IMR-90 (cell line): ENCODE measurements at regions of chr9 and their contacts with region 1.

Region 1: GRCh38 chr9:132507746-132508469 is 74.5 kb upstream of the BARHL1 start:
- DNase-seq: peak; percentile 67
- ATAC-seq: peak; percentile 94
- H3K4me3 ChIP-seq: no peak overlapping the region
- H3K27ac ChIP-seq: no peak overlapping the region
- H3K4me1 ChIP-seq: no peaks in the 10 kb centered on the region
- H3K27me3 ChIP-seq: peaks cover 56% of the 10 kb centered on the region
- CTCF ChIP-seq: peak; percentile 79
- POLR2A ChIP-seq: no peak
- RAD21 ChIP-seq: peak; percentile 85

Region 2: DNA sequence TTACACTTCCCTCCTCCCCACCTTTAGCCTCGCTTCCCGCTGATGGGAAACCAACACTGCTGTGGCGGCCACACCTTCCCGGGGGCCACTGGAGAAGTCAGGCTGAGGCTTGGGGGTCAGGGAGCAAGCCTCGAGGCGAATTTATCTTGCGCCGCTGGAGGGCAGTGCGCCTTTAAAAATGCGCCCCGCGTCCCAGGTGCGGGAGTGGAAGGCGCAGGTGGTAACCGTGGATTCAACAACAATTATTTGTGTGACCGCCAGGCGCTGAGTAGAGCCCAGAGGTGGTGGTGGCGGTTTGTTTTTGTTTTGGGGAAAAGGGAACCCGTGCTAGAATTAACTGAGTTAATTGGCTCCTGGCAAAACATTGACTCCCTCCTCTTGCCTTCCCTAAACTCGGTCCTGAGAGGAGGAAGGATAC is 96.8 kb before region 1 on chr9:
- CTCF ChIA-PET with region 1: no interaction called
- POLR2A ChIA-PET with region 1: no interaction called
- dilution Hi-C with region 1: no loop called
- in situ Hi-C with region 1: no loop called
- intact Hi-C with region 1: loop called (anchors 10 kb)
- DNase-seq: peak; percentile 7
- ATAC-seq: peak; percentile 31; the same call in 1 of the 2 replicates
- H3K4me3 ChIP-seq: no peak overlapping the region
- H3K27ac ChIP-seq: no peak overlapping the region
- H3K4me1 ChIP-seq: no peaks in the 10 kb centered on the region
- H3K27me3 ChIP-seq: peaks cover 43% of the 10 kb centered on the region
- CTCF ChIP-seq: peak; percentile 53
- POLR2A ChIP-seq: no peak
- RAD21 ChIP-seq: peak; percentile 64

Region 3: GRCh38 chr9:132575005-132575609 is 67.2 kb after region 1 on chr9:
- CTCF ChIA-PET with region 1: interaction called, 4 read pairs
- POLR2A ChIA-PET with region 1: no interaction called
- dilution Hi-C with region 1: no loop called
- in situ Hi-C with region 1: loop called (anchors 5 kb)
- intact Hi-C with region 1: loop called (anchors 1 kb)
- DNase-seq: peak; percentile 67
- ATAC-seq: peak; percentile 98
- H3K4me3 ChIP-seq: no peak overlapping the region
- H3K27ac ChIP-seq: no peak overlapping the region
- H3K4me1 ChIP-seq: no peaks in the 10 kb centered on the region
- H3K27me3 ChIP-seq: peaks cover 57% of the 10 kb centered on the region
- CTCF ChIP-seq: peak; percentile 86
- POLR2A ChIP-seq: 0 out of 2 replicates have a peak, but pooled peaks have one; percentile 28
- RAD21 ChIP-seq: peak; percentile 93

Region 4: GRCh38 chr9:132651254-132651653 is 143.3 kb after region 1 on chr9:
- CTCF ChIA-PET with region 1: interaction called, 3 read pairs
- POLR2A ChIA-PET with region 1: no interaction called
- dilution Hi-C with region 1: no loop called
- in situ Hi-C with region 1: no loop called
- intact Hi-C with region 1: loop called (anchors 1 kb)
- DNase-seq: peak; percentile 98
- ATAC-seq: peak; percentile 63
- H3K4me3 ChIP-seq: no peak overlapping the region
- H3K27ac ChIP-seq: no peak overlapping the region
- H3K4me1 ChIP-seq: peaks cover 10% of the 10 kb centered on the region
- H3K27me3 ChIP-seq: no peaks in the 10 kb centered on the region
- CTCF ChIP-seq: peak; percentile 73
- POLR2A ChIP-seq: no peak
- RAD21 ChIP-seq: peak; percentile 64

Region 5: GRCh38 chr9:132901856-132902831 is 394.2 kb after region 1 on chr9:
- CTCF ChIA-PET with region 1: no interaction called
- POLR2A ChIA-PET with region 1: no interaction called
- dilution Hi-C with region 1: no loop called
- in situ Hi-C with region 1: no loop called
- intact Hi-C with region 1: loop called (anchors 5 kb)
- DNase-seq: peak; percentile 83
- ATAC-seq: peak; percentile 99
- H3K4me3 ChIP-seq: no peak overlapping the region
- H3K27ac ChIP-seq: no peak overlapping the region
- H3K4me1 ChIP-seq: no peaks in the 10 kb centered on the region
- H3K27me3 ChIP-seq: no peaks in the 10 kb centered on the region
- CTCF ChIP-seq: peak; percentile 88
- POLR2A ChIP-seq: no peak
- RAD21 ChIP-seq: peak; percentile 63

Region 6: DNA sequence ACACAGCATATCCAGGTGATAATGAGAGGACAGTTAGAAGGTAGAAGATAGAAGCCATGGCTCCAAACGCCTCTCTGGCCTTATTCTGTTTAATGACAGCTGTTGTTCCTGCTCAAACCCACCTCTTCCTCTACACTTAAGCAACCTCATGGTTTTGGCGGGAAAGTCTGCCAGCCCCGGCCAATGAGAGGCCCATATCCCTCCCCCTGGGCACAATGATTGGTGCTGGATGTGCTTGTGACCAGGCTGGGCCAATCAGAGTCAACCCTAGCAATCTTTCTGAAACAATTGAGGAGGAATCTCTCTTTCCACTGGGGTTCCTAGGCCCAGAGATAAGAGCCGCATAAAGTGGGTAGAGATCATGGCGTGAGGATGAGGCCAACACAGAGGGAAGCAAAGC is 465.8 kb after region 1 on chr9:
- CTCF ChIA-PET with region 1: no interaction called
- POLR2A ChIA-PET with region 1: no interaction called
- dilution Hi-C with region 1: no loop called
- in situ Hi-C with region 1: no loop called
- intact Hi-C with region 1: loop called (anchors 1 kb)
- DNase-seq: peak; percentile 18
- ATAC-seq: no peak; the same call in 1 of the 2 replicates
- H3K4me3 ChIP-seq: no peak overlapping the region
- H3K27ac ChIP-seq: no peak overlapping the region
- H3K4me1 ChIP-seq: no peaks in the 10 kb centered on the region
- H3K27me3 ChIP-seq: peaks cover 51% of the 10 kb centered on the region
- CTCF ChIP-seq: no peak
- POLR2A ChIP-seq: no peak
- RAD21 ChIP-seq: no peak